Activated T-helper 2 cell treated with anti-CD3 and anti-CD28 coated beads, Interferon-gamma antibody, Interleukin-2, Interleukin-4, amounts not matched to agents 10 μg/mL and 5 μg/mL and 100 μg/mL, durations not matched to agents 14 hours and 24 hours and 36 hours (primary cell): ENCODE measurements at regions of chr2 and their contacts with region 1.

Region 1: GRCh38 chr2:216498418-216499413 is at the start of gene RPL37A:
- DNase-seq: peak; percentile 88
- H3K4me3 Mint-ChIP-seq: peak within 1 kb of the TSS; percentile 95
- H3K27ac Mint-ChIP-seq: peak within 1 kb of the TSS; percentile 86
- H3K4me1 Mint-ChIP-seq: peaks cover 53% of the 10 kb centered on the region
- H3K27me3 Mint-ChIP-seq: no peaks in the 10 kb centered on the region
- total RNA-seq, gene RPL37A: 3,117 and 3,296 TPM in 2 replicates

Region 2: GRCh38 chr2:216412022-216412999 is 86.4 kb before region 1 on chr2 and contains the start of gene SMARCAL1:
- intact Hi-C with region 1: loop called (anchors 1 kb)
- DNase-seq: peak; percentile 97
- H3K4me3 Mint-ChIP-seq: peak within 1 kb of the TSS; percentile 98
- H3K27ac Mint-ChIP-seq: peak within 1 kb of the TSS; percentile 94
- H3K4me1 Mint-ChIP-seq: peaks cover 19% of the 10 kb centered on the region
- H3K27me3 Mint-ChIP-seq: peaks cover 13% of the 10 kb centered on the region
- total RNA-seq, gene SMARCAL1: 32.8 and 34.1 TPM in 2 replicates

Region 3: DNA sequence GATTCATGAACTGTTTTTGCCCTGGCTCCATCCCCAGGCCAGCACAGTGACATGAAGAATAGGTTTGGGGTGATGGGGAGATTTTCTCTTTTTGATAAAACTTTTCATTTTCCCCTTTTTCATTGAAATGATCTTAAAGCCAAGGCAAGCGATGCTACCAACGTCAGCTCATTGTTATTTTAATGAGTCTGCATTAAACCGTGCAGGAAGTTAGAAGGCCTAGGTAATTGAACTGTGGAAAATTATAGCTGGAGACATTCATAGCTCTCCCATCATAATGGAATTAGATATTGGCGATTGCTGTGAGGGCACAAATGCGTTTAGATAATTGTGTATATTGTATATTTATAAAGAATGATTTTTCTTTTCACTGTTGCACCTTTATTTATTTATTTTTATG is 53.2 kb before region 1 on chr2:
- intact Hi-C with region 1: no loop called
- DNase-seq: no peak
- H3K4me3 Mint-ChIP-seq: no peak overlapping the region
- H3K27ac Mint-ChIP-seq: no peak overlapping the region
- H3K4me1 Mint-ChIP-seq: no peaks in the 10 kb centered on the region
- H3K27me3 Mint-ChIP-seq: no peaks in the 10 kb centered on the region

Region 4: GRCh38 chr2:216474925-216475670 is 23.6 kb before region 1 on chr2:
- intact Hi-C with region 1: loop called (anchors 1 kb)
- DNase-seq: no peak
- H3K4me3 Mint-ChIP-seq: peak overlapping the region; percentile 7
- H3K27ac Mint-ChIP-seq: peak overlapping the region; percentile 29
- H3K4me1 Mint-ChIP-seq: peaks cover 24% of the 10 kb centered on the region
- H3K27me3 Mint-ChIP-seq: no peaks in the 10 kb centered on the region

Region 5: GRCh38 chr2:216857131-216857550 is 358.4 kb after region 1 on chr2:
- intact Hi-C with region 1: loop called (anchors 5 kb)
- DNase-seq: peak; percentile 29
- H3K4me3 Mint-ChIP-seq: no peak overlapping the region
- H3K27ac Mint-ChIP-seq: peak overlapping the region; percentile 88
- H3K4me1 Mint-ChIP-seq: peaks cover 45% of the 10 kb centered on the region
- H3K27me3 Mint-ChIP-seq: no peaks in the 10 kb centered on the region